Cardiac septum (tissue), 1 donor: ENCODE measurements at regions of chr6 and their contacts with region 1.

Region 1: DNA sequence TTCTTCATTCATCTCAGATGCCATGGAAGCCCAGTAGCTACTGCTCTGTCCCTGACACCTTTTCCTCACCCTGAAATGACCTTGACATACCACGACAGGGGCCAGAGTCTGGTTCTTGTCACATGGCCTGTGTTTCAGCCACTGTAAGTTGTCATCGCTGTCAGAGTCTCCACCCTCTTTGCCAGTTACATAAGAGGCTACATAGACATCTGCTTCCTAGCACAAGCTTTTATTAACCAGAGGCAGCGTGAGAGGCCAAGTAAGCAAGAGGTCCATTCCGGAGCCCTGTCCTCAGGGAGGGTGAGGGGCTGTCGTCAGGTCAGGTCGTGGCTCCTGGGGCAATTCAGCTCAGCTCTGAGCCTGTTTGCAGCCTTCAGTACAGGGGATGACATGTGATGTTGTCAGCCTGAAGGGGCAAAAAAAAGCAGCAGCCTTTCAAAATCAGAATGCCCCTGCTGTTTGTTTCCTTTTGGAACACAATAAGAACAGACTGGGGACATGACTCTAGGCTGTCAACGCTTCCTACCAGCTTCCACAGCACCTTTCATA is 146.3 kb downstream of the MTFR2 start:
- DNase-seq: peak; percentile 77

Region 2: DNA sequence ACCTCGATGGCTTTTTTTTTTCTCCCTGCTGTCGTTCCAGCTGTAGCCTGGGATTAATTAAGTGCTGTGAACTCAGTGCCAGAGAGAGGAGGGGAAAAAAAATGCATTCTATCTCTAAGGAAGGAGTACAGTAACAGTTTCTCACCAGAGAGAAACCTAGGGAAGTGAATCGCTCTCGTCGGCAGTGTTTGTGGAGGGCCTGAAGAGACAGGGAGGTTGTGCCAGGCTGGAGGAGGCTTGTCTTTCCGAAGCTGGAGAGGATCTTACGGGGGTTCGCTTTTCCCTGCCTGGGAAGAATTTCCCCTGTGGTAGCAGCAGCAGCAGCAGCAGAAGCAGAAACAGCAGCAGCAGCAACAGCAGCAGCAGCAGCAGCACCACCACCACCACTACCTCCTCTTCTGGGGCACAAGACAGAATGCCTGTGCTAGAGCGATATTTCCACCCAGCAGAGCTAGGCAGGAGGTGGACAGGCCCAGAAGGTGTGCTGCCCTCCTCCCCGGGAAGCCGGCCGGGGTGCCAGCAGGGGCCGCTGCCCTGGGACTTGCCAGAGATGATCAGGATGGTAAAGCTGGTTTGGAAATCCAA is 65.9 kb before region 1 on chr6:
- intact Hi-C with region 1: loop called (anchors 5 kb)
- DNase-seq: no peak

Region 3: DNA sequence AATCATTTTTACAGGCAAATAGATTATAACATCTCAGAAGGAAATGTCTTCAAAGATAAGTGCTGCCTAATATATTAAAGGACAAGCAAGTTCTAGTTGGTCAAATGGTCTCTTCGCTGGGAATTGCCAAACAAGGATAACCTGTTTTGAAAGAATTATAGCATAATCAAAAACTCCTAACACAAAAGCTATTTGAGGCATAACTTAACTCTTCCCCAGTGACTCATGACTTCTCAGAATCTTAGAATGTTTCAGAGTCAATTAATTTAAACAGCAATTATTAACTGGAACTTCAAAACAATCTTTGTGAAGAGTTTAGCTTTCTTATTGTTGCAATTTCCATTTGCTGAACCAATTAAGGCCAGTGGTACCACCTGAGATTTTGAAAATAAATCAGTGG is 19.6 kb after region 1 on chr6:
- intact Hi-C with region 1: no loop called
- DNase-seq: no peak

Region 4: GRCh38 chr6:136146130-136146529 is 42.3 kb after region 1 on chr6:
- intact Hi-C with region 1: loop called (anchors 5 kb)
- DNase-seq: no peak

Region 5: DNA sequence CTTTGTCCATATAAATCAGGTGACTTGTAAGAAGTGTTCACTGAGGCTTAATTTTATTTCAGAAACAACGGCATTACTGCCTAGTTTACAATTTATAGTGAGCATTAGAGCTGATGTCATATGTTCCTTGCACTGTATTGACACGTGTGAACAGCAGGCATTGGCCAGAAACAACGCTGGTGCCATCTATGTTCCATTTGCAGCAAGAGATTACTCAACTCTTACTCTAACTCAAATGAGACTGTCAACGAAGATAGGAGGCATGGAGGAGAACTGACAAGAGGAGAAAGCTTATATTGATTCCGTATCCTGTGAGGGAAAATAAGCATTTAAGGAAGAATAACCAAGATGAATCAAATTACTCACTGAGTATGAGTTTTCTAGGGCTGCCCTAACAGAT is 97.9 kb after region 1 on chr6:
- intact Hi-C with region 1: no loop called
- DNase-seq: no peak